MCF 10A (cell line): ENCODE measurements at regions of chr13 and their contacts with region 1.

Region 1: GRCh38 chr13:76697288-76697687 is 188.9 kb downstream of the KCTD12 start:
- DNase-seq: no peak
- H3K4me3 Mint-ChIP-seq: no peak overlapping the region
- H3K27ac Mint-ChIP-seq: no peak overlapping the region
- H3K4me1 Mint-ChIP-seq: peaks cover 6% of the 10 kb centered on the region
- H3K27me3 Mint-ChIP-seq: no peaks in the 10 kb centered on the region
- CTCF ChIP-seq: no peak

Region 2: GRCh38 chr13:76414320-76414719 is 283.0 kb before region 1 on chr13:
- CTCF ChIA-PET with region 1: no interaction called
- POLR2A ChIA-PET with region 1: no interaction called
- intact Hi-C with region 1: no loop called
- DNase-seq: no peak
- H3K4me3 Mint-ChIP-seq: no peak overlapping the region
- H3K27ac Mint-ChIP-seq: no peak overlapping the region
- H3K4me1 Mint-ChIP-seq: peaks cover 6% of the 10 kb centered on the region
- H3K27me3 Mint-ChIP-seq: no peaks in the 10 kb centered on the region
- CTCF ChIP-seq: no peak

Region 3: DNA sequence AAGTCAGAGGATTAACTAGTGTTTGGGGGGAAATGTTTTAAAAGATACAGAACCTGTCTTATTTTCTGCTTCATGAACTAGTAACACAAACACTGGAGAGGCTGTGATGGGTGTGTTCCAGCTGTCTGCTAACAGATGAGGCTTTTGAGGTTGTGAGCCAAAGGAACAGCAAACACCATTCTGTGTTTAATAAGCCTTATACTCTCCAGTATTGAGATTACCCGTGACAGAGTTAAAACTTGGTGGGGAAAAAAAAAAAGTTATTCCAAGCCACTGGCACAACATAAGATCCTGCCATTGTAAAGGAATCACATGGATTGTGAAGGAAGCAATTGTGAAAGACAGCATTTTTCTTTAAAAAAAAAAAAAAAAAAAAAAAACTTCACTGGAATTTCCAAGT is 140.5 kb after region 1 on chr13:
- CTCF ChIA-PET with region 1: no interaction called
- POLR2A ChIA-PET with region 1: no interaction called
- intact Hi-C with region 1: no loop called
- DNase-seq: no peak
- H3K4me3 Mint-ChIP-seq: no peak overlapping the region
- H3K27ac Mint-ChIP-seq: no peak overlapping the region
- H3K4me1 Mint-ChIP-seq: peaks cover 15% of the 10 kb centered on the region
- H3K27me3 Mint-ChIP-seq: no peaks in the 10 kb centered on the region
- CTCF ChIP-seq: no peak

Region 4: DNA sequence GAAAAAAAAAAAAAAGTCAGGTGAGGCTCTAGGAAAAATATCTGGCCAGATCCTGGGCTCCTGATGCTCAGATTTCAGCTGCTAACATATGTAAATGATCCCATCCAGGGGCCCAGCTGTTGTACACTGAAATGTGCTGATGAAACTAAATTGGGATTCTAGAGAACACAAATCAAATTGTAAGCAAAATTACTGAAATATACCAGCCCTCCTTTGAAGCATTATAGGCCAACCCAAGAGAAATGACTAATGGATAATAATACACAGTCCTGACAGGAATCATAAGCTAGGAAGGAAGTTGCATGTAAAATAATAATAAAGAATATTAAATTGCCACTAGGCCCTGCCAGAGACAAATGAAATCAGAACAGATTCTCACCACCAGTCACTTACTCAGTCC is 171.1 kb after region 1 on chr13:
- CTCF ChIA-PET with region 1: interaction called, 10 read pairs
- POLR2A ChIA-PET with region 1: no interaction called
- intact Hi-C with region 1: no loop called
- DNase-seq: no peak
- H3K4me3 Mint-ChIP-seq: no peak overlapping the region
- H3K27ac Mint-ChIP-seq: no peak overlapping the region
- H3K4me1 Mint-ChIP-seq: no peaks in the 10 kb centered on the region
- H3K27me3 Mint-ChIP-seq: no peaks in the 10 kb centered on the region
- CTCF ChIP-seq: no peak